ENCODE measurements at regions of chr2 and their contacts with region 1.

Region 1: GRCh38 chr2:27095745-27096651 is 9.4 kb downstream of the KHK start:
- DNase-seq: peak; percentile 62 to 74 (median 72)
- H3K4me3 ChIP-seq: peak overlapping the region; percentile 11
- H3K27ac ChIP-seq: no peak overlapping the region
- H3K4me1 ChIP-seq: no peaks in the 10 kb centered on the region
- H3K27me3 ChIP-seq: no peaks in the 10 kb centered on the region
- CTCF ChIP-seq: no peak
- EP300 ChIP-seq: no peak
- POLR2A ChIP-seq: no peak

Region 2: DNA sequence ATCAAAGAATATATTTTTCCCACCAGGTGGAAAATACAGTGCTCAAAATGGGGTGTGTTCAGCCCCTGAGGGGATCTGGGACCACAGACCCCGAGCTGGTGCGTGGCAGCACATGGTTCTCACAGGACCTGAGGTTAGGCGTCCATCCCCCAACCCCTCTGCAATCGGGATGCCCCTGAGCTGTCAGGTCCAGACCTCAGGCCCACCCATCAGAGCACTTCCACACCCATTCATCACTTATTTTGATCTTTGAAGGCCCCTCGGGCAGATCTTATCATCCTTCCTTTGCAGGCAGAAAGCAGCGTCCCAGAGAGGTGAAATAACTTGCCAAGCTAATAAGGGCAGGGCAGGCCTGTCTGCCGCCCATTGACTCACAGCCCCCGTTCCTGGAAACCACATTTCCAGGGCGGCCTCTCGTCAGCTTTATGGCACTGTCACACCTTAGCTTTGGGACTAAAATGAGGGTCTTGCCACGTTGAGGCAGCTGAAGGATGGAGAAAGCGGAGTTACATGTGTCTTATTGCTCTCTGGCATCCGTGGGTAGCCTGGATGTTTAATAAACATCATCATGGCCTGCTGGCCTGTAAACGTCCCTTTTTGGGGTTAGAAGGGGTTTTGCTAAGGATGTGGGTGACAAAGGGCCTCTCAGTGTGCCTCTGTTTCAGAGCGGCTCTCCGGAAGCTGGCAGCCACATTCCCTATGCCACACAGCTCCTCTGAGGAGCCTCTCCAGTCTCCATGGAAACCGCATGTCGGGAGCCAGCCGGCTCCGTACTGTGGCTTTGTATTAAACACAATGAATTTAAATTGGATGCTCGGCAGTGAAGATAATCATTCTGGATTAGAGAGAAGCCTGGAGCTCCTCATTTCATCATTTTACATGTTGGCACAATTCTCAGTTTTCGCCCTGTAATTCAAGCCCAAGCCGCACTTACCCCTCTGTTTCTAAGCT is 183.8 kb before region 1 on chr2:
- intact Hi-C with region 1: no loop called
- DNase-seq: no peak
- H3K4me3 ChIP-seq: no peak overlapping the region
- H3K27ac ChIP-seq: no peak overlapping the region
- H3K4me1 ChIP-seq: no peaks in the 10 kb centered on the region
- H3K27me3 ChIP-seq: no peaks in the 10 kb centered on the region
- CTCF ChIP-seq: no peak
- EP300 ChIP-seq: no peak
- POLR2A ChIP-seq: no peak

Region 3: GRCh38 chr2:27271631-27272340 is 175.8 kb after region 1 on chr2:
- intact Hi-C with region 1: loop called in 3 of 4 experiments (anchors 5 to 10 kb)
- DNase-seq: no peak
- H3K4me3 ChIP-seq: no peak overlapping the region
- H3K27ac ChIP-seq: no peak overlapping the region
- H3K4me1 ChIP-seq: no peaks in the 10 kb centered on the region
- H3K27me3 ChIP-seq: no peaks in the 10 kb centered on the region
- CTCF ChIP-seq: no peak
- EP300 ChIP-seq: no peak
- POLR2A ChIP-seq: no peak

Region 4: DNA sequence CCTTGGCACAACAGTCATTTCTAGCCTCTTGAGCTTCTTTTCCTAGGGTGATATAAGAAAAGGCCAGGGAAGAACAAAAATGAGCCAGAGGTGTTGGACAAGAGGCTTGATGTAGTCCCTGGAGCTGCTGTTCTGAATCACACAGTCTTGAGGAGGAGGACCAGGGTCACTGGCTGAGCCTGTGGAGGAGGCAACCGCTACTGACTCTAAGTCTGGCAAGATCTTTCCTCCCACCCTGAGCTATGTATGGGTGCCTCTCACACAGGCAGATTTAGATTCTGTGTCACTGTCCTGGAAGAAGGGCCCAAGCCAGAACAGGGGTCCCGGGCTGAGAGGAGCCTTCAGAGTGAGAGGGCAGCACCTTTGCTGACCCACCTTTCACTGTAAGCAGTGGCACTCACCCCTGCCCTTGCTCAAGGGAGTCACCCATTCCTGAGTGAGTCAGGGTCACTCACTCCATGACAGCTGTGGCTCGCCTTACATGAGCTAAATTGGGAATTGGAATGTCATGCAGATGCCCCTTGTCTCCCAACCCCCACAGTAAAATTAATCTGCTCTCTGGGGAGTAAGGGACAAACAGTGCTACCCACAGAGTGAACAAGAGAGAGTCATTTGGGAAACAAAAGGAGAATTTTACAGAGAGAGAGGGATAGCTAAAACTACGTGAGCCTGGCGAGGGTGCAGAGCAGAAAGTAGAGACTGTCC is 186.0 kb after region 1 on chr2 and contains the start of gene TRIM54:
- intact Hi-C with region 1: loop called (anchors 5 to 10 kb)
- DNase-seq: no peak
- H3K4me3 ChIP-seq: no peak within 1 kb of the TSS
- H3K27ac ChIP-seq: no peak within 1 kb of the TSS
- H3K4me1 ChIP-seq: no peaks in the 10 kb centered on the region
- H3K27me3 ChIP-seq: no peaks in the 10 kb centered on the region
- CTCF ChIP-seq: no peak
- EP300 ChIP-seq: no peak
- POLR2A ChIP-seq: no peak
- total RNA-seq, gene TRIM54: 0.12 to 0.72 (median 0.49) TPM in 4 of 7 donors, not detected in the others

Region 5: GRCh38 chr2:27322766-27323595 is 227.0 kb after region 1 on chr2 and contains the start of gene MPV17:
- intact Hi-C with region 1: no loop called
- DNase-seq: peak; percentile 90 to 95 (median 92)
- H3K4me3 ChIP-seq: peak within 1 kb of the TSS; percentile 62
- H3K27ac ChIP-seq: peak within 1 kb of the TSS; percentile 56 to 89
- H3K4me1 ChIP-seq: peaks cover 13% of the 10 kb centered on the region
- H3K27me3 ChIP-seq: no peaks in the 10 kb centered on the region
- CTCF ChIP-seq: no peak
- EP300 ChIP-seq: no peak
- POLR2A ChIP-seq: peak; percentile 96
- total RNA-seq, gene MPV17: 47.0 to 64.3 (median 59.9) TPM

Measured in ovary (tissue), 10 donors.